Activated CD4-positive, alpha-beta T cell treated with anti-CD3 and anti-CD28 coated beads, Interleukin-2, amount 10 ng/mL, durations not matched to agents 24 days and 14 days (primary cell): ENCODE measurements at regions of chr1 and their contacts with region 1.

Region 1: GRCh38 chr1:91165033-91165654 is 143.3 kb upstream of the ZNF644 start:
- DNase-seq: peak; percentile 90
- H3K4me3 Mint-ChIP-seq: no peak overlapping the region
- H3K27ac Mint-ChIP-seq: no peak overlapping the region
- H3K4me1 Mint-ChIP-seq: no peaks in the 10 kb centered on the region
- H3K27me3 Mint-ChIP-seq: no peaks in the 10 kb centered on the region

Region 2: GRCh38 chr1:90114521-90115141 is 1050.5 kb before region 1 on chr1:
- intact Hi-C with region 1: loop called (anchors 5 kb)
- DNase-seq: no peak
- H3K4me3 Mint-ChIP-seq: no peak overlapping the region
- H3K27ac Mint-ChIP-seq: no peak overlapping the region
- H3K4me1 Mint-ChIP-seq: no peaks in the 10 kb centered on the region
- H3K27me3 Mint-ChIP-seq: peaks cover 15% of the 10 kb centered on the region

Region 3: GRCh38 chr1:90721210-90722194 is 443.6 kb before region 1 on chr1:
- intact Hi-C with region 1: loop called (anchors 1 kb)
- DNase-seq: peak; percentile 88
- H3K4me3 Mint-ChIP-seq: no peak overlapping the region
- H3K27ac Mint-ChIP-seq: no peak overlapping the region
- H3K4me1 Mint-ChIP-seq: peaks cover 38% of the 10 kb centered on the region
- H3K27me3 Mint-ChIP-seq: peaks cover 88% of the 10 kb centered on the region

Region 4: DNA sequence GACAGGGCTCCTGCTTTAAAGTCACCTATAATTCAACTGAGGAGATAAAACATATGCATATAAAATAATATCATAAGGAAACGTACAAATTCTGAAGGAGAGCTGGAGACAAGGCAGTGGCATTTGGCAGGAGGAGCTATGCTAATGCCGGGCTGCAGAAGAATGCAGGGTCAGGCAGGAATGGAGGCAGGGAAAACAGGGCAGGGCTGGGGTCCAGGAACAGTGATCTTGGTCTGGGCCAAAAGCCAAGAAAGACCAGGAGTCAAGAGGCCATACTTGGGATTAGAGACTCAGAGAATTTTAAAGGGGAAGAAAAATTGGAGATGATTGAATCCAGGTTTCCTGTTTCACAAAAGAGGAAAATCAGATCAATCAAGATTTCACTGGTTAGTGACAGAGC is 764.1 kb after region 1 on chr1:
- intact Hi-C with region 1: loop called (anchors 5 kb)
- DNase-seq: no peak
- H3K4me3 Mint-ChIP-seq: no peak overlapping the region
- H3K27ac Mint-ChIP-seq: no peak overlapping the region
- H3K4me1 Mint-ChIP-seq: peaks cover 1% of the 10 kb centered on the region
- H3K27me3 Mint-ChIP-seq: peaks cover 3% of the 10 kb centered on the region